ENCODE measurements at regions of chr14 and their contacts with region 1.

Region 1: GRCh38 chr14:49946320-49947141 is 53.6 kb downstream of the ARF6 start:
- DNase-seq: peak; percentile 62
- ATAC-seq: peak; percentile 53
- H3K4me3 Mint-ChIP-seq: peak overlapping the region; percentile 31
- H3K27ac Mint-ChIP-seq: peak overlapping the region; percentile 78
- H3K4me1 Mint-ChIP-seq: peaks cover 71% of the 10 kb centered on the region
- H3K27me3 Mint-ChIP-seq: no peaks in the 10 kb centered on the region

Region 2: DNA sequence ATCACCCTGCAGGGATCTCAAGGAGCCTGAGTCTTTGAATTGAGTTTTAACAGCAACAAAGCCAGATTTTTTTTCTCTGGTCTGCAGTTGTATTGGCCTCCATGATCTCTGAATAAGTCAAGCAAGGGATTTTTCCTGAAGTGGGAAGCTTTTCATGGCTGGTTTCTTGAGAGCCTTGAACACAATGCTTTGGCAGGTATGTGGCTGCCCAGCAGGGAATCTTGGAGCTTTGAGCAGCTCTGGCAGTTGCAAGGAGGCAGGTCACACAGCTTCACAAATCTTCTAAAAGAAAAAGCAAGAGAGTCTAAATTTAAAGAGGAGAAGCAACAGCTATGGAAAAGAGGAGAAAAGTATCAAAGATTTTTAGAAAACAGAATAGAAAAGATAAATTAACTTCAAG is 420.4 kb before region 1 on chr14:
- CTCF ChIA-PET with region 1: no interaction called
- POLR2A ChIA-PET with region 1: no interaction called
- intact Hi-C with region 1: no loop called
- DNase-seq: no peak
- ATAC-seq: no peak
- H3K4me3 Mint-ChIP-seq: no peak overlapping the region
- H3K27ac Mint-ChIP-seq: no peak overlapping the region
- H3K4me1 Mint-ChIP-seq: no peaks in the 10 kb centered on the region
- H3K27me3 Mint-ChIP-seq: peaks cover 9% of the 10 kb centered on the region

Region 3: DNA sequence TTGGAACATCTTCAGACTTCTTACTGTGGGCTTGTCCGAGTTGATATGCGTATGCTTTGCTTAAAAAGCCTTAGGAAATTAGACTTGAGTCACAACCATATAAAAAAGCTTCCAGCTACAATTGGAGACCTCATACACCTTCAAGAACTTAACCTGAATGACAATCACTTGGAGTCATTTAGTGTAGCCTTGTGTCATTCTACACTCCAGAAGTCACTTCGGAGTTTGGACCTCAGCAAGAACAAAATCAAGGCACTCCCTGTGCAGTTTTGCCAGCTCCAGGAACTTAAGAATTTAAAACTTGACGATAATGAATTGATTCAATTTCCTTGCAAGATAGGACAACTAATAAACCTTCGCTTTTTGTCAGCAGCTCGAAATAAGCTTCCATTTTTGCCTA is 338.9 kb before region 1 on chr14:
- CTCF ChIA-PET with region 1: no interaction called
- POLR2A ChIA-PET with region 1: no interaction called
- intact Hi-C with region 1: no loop called
- DNase-seq: no peak
- ATAC-seq: no peak
- H3K4me3 Mint-ChIP-seq: no peak overlapping the region
- H3K27ac Mint-ChIP-seq: no peak overlapping the region
- H3K4me1 Mint-ChIP-seq: peaks cover 6% of the 10 kb centered on the region
- H3K27me3 Mint-ChIP-seq: no peaks in the 10 kb centered on the region

Region 4: GRCh38 chr14:49720744-49721143 is 225.8 kb before region 1 on chr14:
- CTCF ChIA-PET with region 1: no interaction called
- POLR2A ChIA-PET with region 1: no interaction called
- intact Hi-C with region 1: no loop called
- DNase-seq: no peak
- ATAC-seq: no peak
- H3K4me3 Mint-ChIP-seq: no peak overlapping the region
- H3K27ac Mint-ChIP-seq: no peak overlapping the region
- H3K4me1 Mint-ChIP-seq: no peaks in the 10 kb centered on the region
- H3K27me3 Mint-ChIP-seq: no peaks in the 10 kb centered on the region

Region 5: GRCh38 chr14:49897968-49898367 is 48.6 kb before region 1 on chr14:
- CTCF ChIA-PET with region 1: no interaction called
- POLR2A ChIA-PET with region 1: interaction called, 4 read pairs
- intact Hi-C with region 1: loop called in 1 of 2 experiments (anchors 2 kb)
- DNase-seq: no peak
- ATAC-seq: no peak
- H3K4me3 Mint-ChIP-seq: peak overlapping the region; percentile 91
- H3K27ac Mint-ChIP-seq: peak overlapping the region; percentile 98
- H3K4me1 Mint-ChIP-seq: peaks cover 32% of the 10 kb centered on the region
- H3K27me3 Mint-ChIP-seq: no peaks in the 10 kb centered on the region

Region 6: GRCh38 chr14:49908432-49908781 is 38.1 kb before region 1 on chr14:
- CTCF ChIA-PET with region 1: no interaction called
- POLR2A ChIA-PET with region 1: no interaction called
- intact Hi-C with region 1: loop called in 1 of 2 experiments (anchors 2 kb)
- DNase-seq: no peak
- ATAC-seq: no peak
- H3K4me3 Mint-ChIP-seq: no peak overlapping the region
- H3K27ac Mint-ChIP-seq: no peak overlapping the region
- H3K4me1 Mint-ChIP-seq: peaks cover 46% of the 10 kb centered on the region
- H3K27me3 Mint-ChIP-seq: no peaks in the 10 kb centered on the region

Region 7: DNA sequence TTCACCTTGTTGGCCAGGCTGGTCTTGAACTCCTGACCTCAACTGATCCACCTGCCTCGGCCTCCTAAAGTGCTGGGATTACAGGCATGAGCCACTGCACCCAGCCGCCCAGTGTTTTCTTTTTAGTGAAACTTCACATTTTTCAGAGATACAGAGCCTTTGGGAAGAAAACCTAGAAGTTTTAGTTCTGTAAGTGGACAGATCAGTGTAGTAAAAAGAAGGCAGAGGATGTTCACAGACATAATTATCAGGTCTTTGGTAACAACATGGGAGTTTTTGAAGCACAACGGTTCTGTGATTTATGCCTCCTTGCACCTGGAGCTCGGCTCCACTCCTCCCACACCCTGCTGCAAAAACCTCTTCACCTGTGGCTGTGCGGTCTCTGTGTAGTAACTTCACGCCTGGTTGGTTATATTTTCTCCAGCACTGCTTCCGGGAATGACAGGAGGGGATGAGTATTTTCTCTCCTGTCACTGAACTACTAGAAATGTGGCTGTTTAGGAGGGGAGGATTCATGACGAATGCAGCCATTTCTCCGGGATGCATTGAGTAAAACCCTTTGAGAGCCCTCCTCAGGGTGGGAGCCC is 13.4 kb after region 1 on chr14:
- CTCF ChIA-PET with region 1: interaction called, 3 read pairs
- POLR2A ChIA-PET with region 1: no interaction called
- intact Hi-C with region 1: loop called in 1 of 2 experiments (anchors 1 kb)
- DNase-seq: peak; percentile 53
- ATAC-seq: peak; percentile 37
- H3K4me3 Mint-ChIP-seq: no peak overlapping the region
- H3K27ac Mint-ChIP-seq: peak overlapping the region; percentile 42
- H3K4me1 Mint-ChIP-seq: peaks cover 42% of the 10 kb centered on the region
- H3K27me3 Mint-ChIP-seq: no peaks in the 10 kb centered on the region

Region 8: DNA sequence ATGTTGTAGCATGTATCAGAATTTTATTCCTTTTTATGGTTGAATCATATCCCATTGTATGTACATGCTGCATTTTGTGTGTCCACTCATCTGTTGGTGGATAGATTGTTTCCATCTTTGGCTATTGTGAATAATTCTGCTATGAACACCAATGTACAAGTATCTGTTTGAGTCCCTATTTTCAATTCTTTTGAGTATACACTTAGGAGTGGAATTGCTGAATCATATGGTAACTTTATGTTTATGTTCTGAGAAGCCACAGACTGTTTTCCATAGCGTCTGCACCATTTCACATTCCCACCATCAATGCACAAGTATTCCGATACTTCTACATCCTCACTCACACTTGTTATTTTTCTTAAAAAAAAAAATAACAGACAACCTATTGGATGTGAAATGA is 37.9 kb after region 1 on chr14:
- CTCF ChIA-PET with region 1: interaction called, 4 read pairs
- POLR2A ChIA-PET with region 1: interaction called, 3 read pairs
- intact Hi-C with region 1: loop called in 1 of 2 experiments (anchors 1 kb)
- DNase-seq: peak; percentile 50
- ATAC-seq: peak; percentile 79
- H3K4me3 Mint-ChIP-seq: peak overlapping the region; percentile 16
- H3K27ac Mint-ChIP-seq: peak overlapping the region; percentile 85
- H3K4me1 Mint-ChIP-seq: peaks cover 70% of the 10 kb centered on the region
- H3K27me3 Mint-ChIP-seq: no peaks in the 10 kb centered on the region

Measured in activated CD4-positive, alpha-beta T cell treated with anti-CD3 and anti-CD28 coated beads for 36 hours (primary cell).